Activated naive CD4-positive, alpha-beta T cell treated with anti-CD3 and anti-CD28 coated beads for 36 hours (primary cell): ENCODE measurements at regions of chr14 and their contacts with region 1.

Region 1: GRCh38 chr14:91244501-91244901 is at the start of gene GPR68:
- DNase-seq: peak; percentile 39
- H3K4me3 Mint-ChIP-seq: peak within 1 kb of the TSS; percentile 55
- H3K27ac Mint-ChIP-seq: peak within 1 kb of the TSS; percentile 97
- H3K4me1 Mint-ChIP-seq: peaks cover 81% of the 10 kb centered on the region
- H3K27me3 Mint-ChIP-seq: no peaks in the 10 kb centered on the region
- total RNA-seq, gene GPR68: 1.2 to 1.3 TPM

Region 2: GRCh38 chr14:91193069-91193468 is 51.4 kb before region 1 on chr14:
- CTCF ChIA-PET with region 1: interaction called, 8 read pairs
- intact Hi-C with region 1: loop called (anchors 1 kb)
- DNase-seq: no peak
- H3K4me3 Mint-ChIP-seq: no peak overlapping the region
- H3K27ac Mint-ChIP-seq: peak overlapping the region; percentile 9
- H3K4me1 Mint-ChIP-seq: peaks cover 19% of the 10 kb centered on the region
- H3K27me3 Mint-ChIP-seq: no peaks in the 10 kb centered on the region

Region 3: GRCh38 chr14:91286530-91286937 is 42.0 kb after region 1 on chr14:
- CTCF ChIA-PET with region 1: interaction called, 10 read pairs
- intact Hi-C with region 1: no loop called
- DNase-seq: peak; percentile 90
- H3K4me3 Mint-ChIP-seq: no peak overlapping the region
- H3K27ac Mint-ChIP-seq: peak overlapping the region; percentile 74
- H3K4me1 Mint-ChIP-seq: peaks cover 4% of the 10 kb centered on the region
- H3K27me3 Mint-ChIP-seq: no peaks in the 10 kb centered on the region

Region 4: GRCh38 chr14:91317381-91318308 is 73.1 kb after region 1 on chr14:
- CTCF ChIA-PET with region 1: interaction called, 5 read pairs
- intact Hi-C with region 1: loop called (anchors 2 kb)
- DNase-seq: peak; percentile 87
- H3K4me3 Mint-ChIP-seq: peak overlapping the region; percentile 60
- H3K27ac Mint-ChIP-seq: peak overlapping the region; percentile 95
- H3K4me1 Mint-ChIP-seq: peaks cover 72% of the 10 kb centered on the region
- H3K27me3 Mint-ChIP-seq: no peaks in the 10 kb centered on the region

Region 5: GRCh38 chr14:91363776-91364523 is 119.4 kb after region 1 on chr14:
- CTCF ChIA-PET with region 1: no interaction called
- intact Hi-C with region 1: no loop called
- DNase-seq: no peak
- H3K4me3 Mint-ChIP-seq: no peak overlapping the region
- H3K27ac Mint-ChIP-seq: peak overlapping the region; percentile 41
- H3K4me1 Mint-ChIP-seq: peaks cover 82% of the 10 kb centered on the region
- H3K27me3 Mint-ChIP-seq: no peaks in the 10 kb centered on the region

Region 6: GRCh38 chr14:91396959-91397815 is 152.7 kb after region 1 on chr14:
- CTCF ChIA-PET with region 1: no interaction called
- intact Hi-C with region 1: no loop called
- DNase-seq: peak; percentile 88
- H3K4me3 Mint-ChIP-seq: peak overlapping the region; percentile 64
- H3K27ac Mint-ChIP-seq: peak overlapping the region; percentile 87
- H3K4me1 Mint-ChIP-seq: peaks cover 92% of the 10 kb centered on the region
- H3K27me3 Mint-ChIP-seq: no peaks in the 10 kb centered on the region

Region 7: DNA sequence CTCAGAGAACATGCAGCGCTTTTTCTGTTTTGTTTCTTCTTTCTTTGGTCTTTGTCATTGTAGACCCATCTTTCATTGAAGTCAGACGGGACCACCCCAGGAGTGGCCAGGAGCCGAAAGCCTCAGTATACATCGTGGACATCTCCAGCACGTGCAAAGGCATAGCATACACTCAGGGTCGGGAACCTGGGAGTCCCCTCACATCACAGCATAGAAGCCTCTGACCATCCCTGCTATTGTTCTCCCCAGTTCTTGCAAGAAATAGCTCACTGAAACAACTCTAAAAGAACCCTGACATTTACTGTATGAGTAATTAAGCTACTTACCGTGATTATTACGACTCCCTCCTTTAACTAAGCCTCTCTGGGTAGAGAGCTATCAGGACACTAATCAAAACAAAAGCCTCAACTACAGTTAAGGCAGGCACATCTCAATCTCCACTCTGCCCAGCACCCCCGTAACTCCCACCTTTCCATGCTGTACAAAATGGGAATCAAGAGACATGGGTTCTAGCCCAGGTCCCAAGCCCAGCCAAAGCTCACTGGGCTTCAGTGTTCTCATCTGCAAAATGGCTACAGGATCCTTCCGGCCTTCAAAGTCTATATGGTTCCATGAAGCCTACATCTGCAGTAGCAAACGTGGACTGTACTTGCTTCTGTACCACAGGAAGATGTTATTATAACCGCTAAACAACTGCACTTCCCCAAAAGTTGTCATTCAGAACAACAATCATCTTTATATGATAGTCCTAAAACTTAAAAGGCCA is 166.5 kb after region 1 on chr14:
- CTCF ChIA-PET with region 1: no interaction called
- intact Hi-C with region 1: loop called (anchors 2 kb)
- DNase-seq: peak; percentile 62
- H3K4me3 Mint-ChIP-seq: peak overlapping the region; percentile 53
- H3K27ac Mint-ChIP-seq: peak overlapping the region; percentile 95
- H3K4me1 Mint-ChIP-seq: peaks cover 91% of the 10 kb centered on the region
- H3K27me3 Mint-ChIP-seq: no peaks in the 10 kb centered on the region